Activated CD4-positive, alpha-beta T cell treated with anti-CD3 and anti-CD28 coated beads, Interleukin-2, amount 10 ng/mL, durations not matched to agents 7 days and 5 days (primary cell): ENCODE measurements at regions of chr7 and their contacts with region 1.

Region 1: GRCh38 chr7:100611974-100612729 is at the start of gene MOSPD3:
- DNase-seq: peak; percentile 99
- H3K4me3 Mint-ChIP-seq: peak within 1 kb of the TSS; percentile 98
- H3K27ac Mint-ChIP-seq: peak within 1 kb of the TSS; percentile 100
- H3K4me1 Mint-ChIP-seq: peaks cover 27% of the 10 kb centered on the region
- H3K27me3 Mint-ChIP-seq: peaks cover 1% of the 10 kb centered on the region
- total RNA-seq, gene MOSPD3: 59.7 to 66.7 TPM

Region 2: DNA sequence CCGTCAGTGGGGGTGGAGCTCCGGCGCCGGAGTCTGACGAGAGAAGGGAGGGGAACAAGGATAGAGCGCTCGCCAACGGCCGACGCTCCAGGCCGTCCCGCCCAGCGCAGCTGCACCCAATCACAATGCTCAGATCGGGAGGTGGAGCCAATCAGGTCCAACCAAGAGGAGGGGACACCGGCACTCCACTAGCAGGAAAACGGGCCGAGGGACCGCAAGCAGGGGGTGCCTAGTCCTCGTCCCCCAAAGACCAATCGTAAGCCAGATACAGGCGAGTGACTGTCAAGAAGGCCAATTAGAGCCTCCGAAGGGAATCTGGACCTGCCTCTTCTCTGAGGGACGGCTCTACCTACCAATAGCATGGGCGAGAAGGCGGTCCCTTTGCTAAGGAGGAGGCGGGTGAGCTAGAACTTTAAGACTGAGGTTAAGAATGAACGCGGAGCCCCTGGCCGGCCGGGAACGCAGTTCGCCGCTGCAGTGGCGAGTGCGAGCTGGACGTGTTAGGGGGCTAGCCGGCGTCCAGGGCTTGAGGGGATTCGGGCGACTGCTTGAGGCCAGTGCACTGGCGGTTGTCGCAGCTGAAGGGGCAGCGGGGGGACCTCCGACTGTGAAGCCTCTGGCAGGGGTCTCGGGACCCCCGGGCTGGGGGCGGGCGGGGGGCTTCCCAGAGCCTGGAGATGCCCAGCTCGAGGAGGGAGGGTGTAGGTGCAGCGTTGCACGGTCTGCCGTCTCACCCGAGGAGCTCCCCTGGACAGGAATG is 25.7 kb before region 1 on chr7 and contains the start of gene FBXO24:
- CTCF ChIA-PET with region 1: interaction called, 11 read pairs
- POLR2A ChIA-PET with region 1: interaction called, 8 read pairs
- DNase-seq: peak; percentile 100
- H3K4me3 Mint-ChIP-seq: peak within 1 kb of the TSS; percentile 92
- H3K27ac Mint-ChIP-seq: peak within 1 kb of the TSS; percentile 92
- H3K4me1 Mint-ChIP-seq: peaks cover 27% of the 10 kb centered on the region
- H3K27me3 Mint-ChIP-seq: peaks cover 5% of the 10 kb centered on the region
- total RNA-seq, gene FBXO24: 1.3 to 1.5 TPM

Region 3: DNA sequence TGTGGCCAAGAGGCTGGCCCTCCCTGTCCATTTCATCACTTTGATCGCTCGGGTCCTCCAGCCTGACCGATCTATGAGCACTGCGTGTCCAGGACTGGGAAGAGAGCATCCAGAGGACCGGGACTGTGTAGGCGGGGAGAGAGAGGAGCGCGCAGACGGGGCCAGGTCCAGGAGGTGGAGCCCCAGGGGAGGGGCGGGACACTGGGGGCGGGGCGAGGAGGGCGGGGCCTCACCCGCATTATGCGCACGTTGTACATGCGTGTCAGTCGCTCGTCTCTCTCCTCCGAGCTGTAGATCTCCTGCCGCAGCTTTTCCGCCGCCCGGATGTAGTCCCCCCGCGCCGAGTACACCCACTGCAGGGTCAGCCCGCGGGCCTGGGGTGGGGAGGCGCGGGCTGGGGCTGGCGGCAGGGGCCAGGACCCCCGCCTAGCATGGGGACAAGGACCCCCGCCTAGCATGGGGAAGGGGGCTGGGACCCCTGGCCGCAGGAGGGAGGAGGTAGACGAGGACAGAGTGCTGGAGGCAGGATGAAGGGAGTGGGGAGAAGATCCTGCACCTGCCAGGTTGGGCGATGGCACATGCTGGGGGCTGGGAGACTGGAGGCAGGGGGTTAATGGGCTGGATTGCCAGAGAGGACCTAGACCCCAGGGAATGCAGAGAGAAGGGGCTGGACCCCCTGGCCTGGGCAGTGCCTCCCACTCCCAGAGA is 14.5 kb after region 1 on chr7:
- CTCF ChIA-PET with region 1: interaction called, 26 read pairs
- POLR2A ChIA-PET with region 1: interaction called, 4 read pairs
- DNase-seq: peak; percentile 90
- H3K4me3 Mint-ChIP-seq: peak overlapping the region; percentile 76
- H3K27ac Mint-ChIP-seq: peak overlapping the region; percentile 86
- H3K4me1 Mint-ChIP-seq: peaks cover 70% of the 10 kb centered on the region
- H3K27me3 Mint-ChIP-seq: no peaks in the 10 kb centered on the region

Region 4: GRCh38 chr7:100632951-100633717 is 21.0 kb after region 1 on chr7:
- CTCF ChIA-PET with region 1: interaction called, 26 read pairs
- POLR2A ChIA-PET with region 1: no interaction called
- DNase-seq: peak; percentile 61
- H3K4me3 Mint-ChIP-seq: peak overlapping the region; percentile 78
- H3K27ac Mint-ChIP-seq: peak overlapping the region; percentile 88
- H3K4me1 Mint-ChIP-seq: peaks cover 41% of the 10 kb centered on the region
- H3K27me3 Mint-ChIP-seq: peaks cover 2% of the 10 kb centered on the region

Region 5: GRCh38 chr7:100781255-100781654 is 169.1 kb after region 1 on chr7:
- CTCF ChIA-PET with region 1: no interaction called
- POLR2A ChIA-PET with region 1: no interaction called
- DNase-seq: no peak
- H3K4me3 Mint-ChIP-seq: no peak overlapping the region
- H3K27ac Mint-ChIP-seq: no peak overlapping the region
- H3K4me1 Mint-ChIP-seq: peaks cover 3% of the 10 kb centered on the region
- H3K27me3 Mint-ChIP-seq: peaks cover 13% of the 10 kb centered on the region